ENCODE measurements at regions of chr6 and their contacts with region 1.

Region 1: DNA sequence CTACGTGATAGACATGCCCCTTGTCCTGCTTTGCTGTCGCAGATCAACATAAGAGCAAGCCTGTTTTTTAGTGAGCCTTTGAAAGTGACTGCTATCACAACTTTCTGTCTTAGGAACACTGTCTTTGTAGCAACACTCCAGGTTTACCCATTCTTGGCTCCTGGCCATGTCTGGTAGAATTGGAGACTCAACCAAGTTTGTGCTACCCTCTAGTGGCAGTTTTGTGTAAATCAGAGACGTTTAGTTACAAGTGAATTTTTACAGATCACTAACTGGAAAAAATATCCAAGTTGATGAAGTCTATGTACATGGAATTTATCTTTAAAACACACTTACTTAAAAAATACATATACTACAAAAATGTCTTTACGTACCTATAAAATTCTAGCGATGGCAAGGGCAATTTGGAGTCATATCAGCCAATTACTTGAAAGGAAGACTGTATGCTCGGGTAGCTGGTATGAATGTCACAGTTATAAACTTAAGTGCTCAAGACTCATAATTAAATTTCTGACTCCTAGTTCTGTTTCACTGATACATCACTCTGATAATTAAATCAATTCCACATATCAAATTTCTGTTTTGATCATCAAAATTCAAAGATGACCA is 101.4 kb downstream of the ADGB start:
- DNase-seq: peak; percentile 70
- H3K4me3 ChIP-seq: no peak overlapping the region
- H3K27ac ChIP-seq: no peak overlapping the region
- H3K4me1 ChIP-seq: no peaks in the 10 kb centered on the region
- H3K27me3 ChIP-seq: no peaks in the 10 kb centered on the region
- CTCF ChIP-seq: peak; percentile 70 to 74

Region 2: DNA sequence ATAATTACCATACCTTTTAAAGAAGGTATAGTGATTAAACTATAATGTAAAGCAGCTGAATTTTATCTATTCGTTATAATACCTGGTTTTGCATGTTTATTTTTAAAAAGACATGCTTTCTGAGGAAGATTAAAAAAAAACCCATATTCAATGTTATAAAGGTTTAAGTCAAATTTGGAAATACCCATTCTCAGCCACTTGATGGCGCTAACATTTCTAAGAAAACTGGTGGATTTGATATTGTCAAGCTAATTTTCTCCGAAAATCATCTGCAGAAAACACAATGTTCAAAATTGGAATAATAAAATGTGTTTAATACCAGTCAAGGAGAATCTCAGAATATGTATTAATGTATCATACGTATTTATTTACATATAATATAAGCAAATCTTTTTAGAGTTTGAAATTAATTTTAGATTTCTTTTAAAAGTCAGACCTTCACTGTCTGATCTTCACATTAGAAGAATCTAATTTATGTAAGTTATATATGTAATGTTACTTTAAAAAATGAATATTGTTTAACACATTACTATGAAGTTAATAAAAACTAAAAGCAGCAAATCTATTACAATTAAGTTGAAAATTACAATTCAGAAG is 771.0 kb before region 1 on chr6:
- CTCF ChIA-PET with region 1: no interaction called
- dilution Hi-C with region 1: no loop called
- in situ Hi-C with region 1: no loop called
- intact Hi-C with region 1: loop called (anchors 2 kb)
- DNase-seq: peak; percentile 5
- H3K4me3 ChIP-seq: no peak overlapping the region
- H3K27ac ChIP-seq: no peak overlapping the region
- H3K4me1 ChIP-seq: no peaks in the 10 kb centered on the region
- H3K27me3 ChIP-seq: no peaks in the 10 kb centered on the region
- CTCF ChIP-seq: peak; percentile 60 to 68

Region 3: DNA sequence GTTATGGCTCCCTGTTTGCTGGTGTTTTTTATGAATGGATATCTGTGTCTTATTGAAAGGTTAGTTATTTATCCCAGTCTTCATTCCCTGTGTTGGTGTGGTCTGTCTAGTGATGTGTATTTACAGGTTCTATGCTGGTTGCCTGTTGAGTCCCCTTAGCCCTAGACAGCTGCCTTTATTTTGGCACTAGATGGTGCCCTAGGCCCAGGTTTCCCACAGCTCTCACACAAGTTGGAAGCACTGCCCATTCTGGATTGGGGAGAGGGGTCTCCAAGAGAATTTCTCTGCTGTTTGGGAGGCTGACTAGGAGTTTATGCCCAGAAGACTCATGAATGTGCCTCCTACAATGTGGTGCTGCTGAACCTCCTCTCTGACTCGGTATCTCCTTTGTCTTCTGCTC is 658.9 kb before region 1 on chr6:
- CTCF ChIA-PET with region 1: no interaction called
- dilution Hi-C with region 1: no loop called
- in situ Hi-C with region 1: loop called in 1 of 2 experiments (anchors 25 kb)
- intact Hi-C with region 1: loop called (anchors 1 kb)
- DNase-seq: peak; percentile 11
- H3K4me3 ChIP-seq: no peak overlapping the region
- H3K27ac ChIP-seq: no peak overlapping the region
- H3K4me1 ChIP-seq: no peaks in the 10 kb centered on the region
- H3K27me3 ChIP-seq: peaks cover 2% of the 10 kb centered on the region
- CTCF ChIP-seq: peak; percentile 51 to 76

Region 4: GRCh38 chr6:146289816-146290588 is 410.2 kb before region 1 on chr6:
- CTCF ChIA-PET with region 1: no interaction called
- dilution Hi-C with region 1: no loop called
- in situ Hi-C with region 1: no loop called
- intact Hi-C with region 1: loop called (anchors 10 kb)
- DNase-seq: peak; percentile 50
- H3K4me3 ChIP-seq: no peak overlapping the region
- H3K27ac ChIP-seq: no peak overlapping the region
- H3K4me1 ChIP-seq: peaks cover 10% of the 10 kb centered on the region
- H3K27me3 ChIP-seq: no peaks in the 10 kb centered on the region
- CTCF ChIP-seq: no peak

Region 5: DNA sequence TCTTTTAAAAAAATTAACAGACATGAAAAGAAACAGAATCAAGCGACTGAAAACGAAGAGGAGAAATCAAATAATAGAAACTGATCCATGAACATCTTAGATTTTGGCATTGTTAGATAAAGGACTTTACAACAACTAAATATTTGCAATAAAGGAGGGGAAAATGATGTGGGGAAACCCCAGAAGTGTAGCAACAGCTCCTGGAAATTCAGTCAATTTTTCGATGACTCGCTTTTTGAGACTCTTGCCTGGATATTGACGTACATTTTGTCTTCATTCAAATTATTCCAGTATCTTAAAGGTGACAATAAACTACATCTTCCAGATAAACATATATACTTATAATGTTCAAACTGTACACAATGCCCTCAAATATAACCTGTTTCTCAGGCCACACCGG is 57.3 kb before region 1 on chr6:
- CTCF ChIA-PET with region 1: no interaction called
- dilution Hi-C with region 1: no loop called
- in situ Hi-C with region 1: no loop called
- intact Hi-C with region 1: no loop called
- DNase-seq: no peak
- H3K4me3 ChIP-seq: no peak overlapping the region
- H3K27ac ChIP-seq: no peak overlapping the region
- H3K4me1 ChIP-seq: no peaks in the 10 kb centered on the region
- H3K27me3 ChIP-seq: no peaks in the 10 kb centered on the region
- CTCF ChIP-seq: no peak